PC-3 (cell line): ENCODE measurements at regions of chr1 and their contacts with region 1.

Region 1: GRCh38 chr1:87478231-87478630 is 149.6 kb downstream of the LMO4 start:
- DNase-seq: peak; percentile 28
- ATAC-seq: peak; percentile 65
- H3K4me3 ChIP-seq: no peak overlapping the region
- H3K27ac ChIP-seq: no peak overlapping the region
- H3K4me1 ChIP-seq: peaks cover 13% of the 10 kb centered on the region
- H3K27me3 ChIP-seq: no peaks in the 10 kb centered on the region
- CTCF ChIP-seq: peak; percentile 41; the same call in 1 of the 2 replicates

Region 2: GRCh38 chr1:87154384-87154783 is 323.8 kb before region 1 on chr1:
- CTCF ChIA-PET with region 1: no interaction called
- POLR2A ChIA-PET with region 1: no interaction called
- intact Hi-C with region 1: no loop called
- DNase-seq: no peak
- ATAC-seq: no peak
- H3K4me3 ChIP-seq: no peak overlapping the region
- H3K27ac ChIP-seq: no peak overlapping the region
- H3K4me1 ChIP-seq: peaks cover 5% of the 10 kb centered on the region; the same call in 1 of the 2 replicates
- H3K27me3 ChIP-seq: no peaks in the 10 kb centered on the region
- CTCF ChIP-seq: no peak

Region 3: GRCh38 chr1:87335175-87335884 is 142.9 kb before region 1 on chr1:
- CTCF ChIA-PET with region 1: no interaction called
- POLR2A ChIA-PET with region 1: no interaction called
- intact Hi-C with region 1: loop called (anchors 10 kb)
- DNase-seq: peak; percentile 59
- ATAC-seq: peak; percentile 41
- H3K4me3 ChIP-seq: peak overlapping the region; percentile 73
- H3K27ac ChIP-seq: peak overlapping the region; percentile 38
- H3K4me1 ChIP-seq: peaks cover 32% of the 10 kb centered on the region
- H3K27me3 ChIP-seq: no peaks in the 10 kb centered on the region
- CTCF ChIP-seq: 0 out of 2 replicates have a peak, but pooled peaks have one; percentile 20

Region 4: DNA sequence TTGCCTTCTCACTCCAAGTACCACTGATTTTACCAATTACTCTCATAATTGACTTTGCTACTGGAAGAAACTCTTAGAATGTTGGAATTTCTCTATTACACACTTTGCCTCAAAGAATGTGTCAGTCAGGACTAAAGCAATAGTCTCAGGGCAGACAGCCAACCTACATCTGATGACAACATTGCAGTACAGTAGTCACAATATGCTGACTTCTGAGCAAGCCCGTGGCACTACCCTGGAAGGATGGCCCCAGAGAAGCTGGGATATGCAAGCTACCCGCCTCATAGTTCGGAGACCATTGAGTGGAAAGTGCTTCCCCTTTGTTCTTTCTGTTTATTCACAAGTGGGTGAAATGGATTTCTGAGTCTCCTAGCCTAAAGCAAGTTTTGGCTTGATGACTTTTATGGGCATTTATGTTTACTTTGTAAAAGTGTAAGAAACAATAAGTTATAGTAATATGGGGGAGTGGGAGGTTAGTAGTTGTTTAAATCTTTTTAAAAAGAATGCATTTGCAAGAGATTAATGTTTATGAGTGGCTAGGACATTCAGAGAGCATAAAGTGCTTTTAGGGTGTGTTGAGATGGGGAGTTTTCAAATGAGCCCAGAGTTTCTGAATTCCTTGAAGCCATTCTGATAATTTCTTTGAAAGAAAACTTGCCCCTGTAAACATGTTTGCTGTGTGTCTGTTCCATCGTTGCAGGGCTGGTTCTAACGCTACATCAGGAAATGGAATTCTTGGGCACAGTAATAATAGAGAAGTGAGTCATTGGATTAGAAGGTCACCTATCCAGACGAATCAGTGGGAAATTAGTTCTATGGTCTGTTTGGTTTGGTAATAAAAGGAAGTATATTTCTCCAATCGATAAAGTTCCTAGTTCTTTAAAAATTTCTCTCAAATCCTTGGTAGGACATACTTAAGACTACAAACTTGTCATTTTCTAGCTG is 85.7 kb before region 1 on chr1:
- CTCF ChIA-PET with region 1: no interaction called
- POLR2A ChIA-PET with region 1: no interaction called
- intact Hi-C with region 1: loop called (anchors 5 kb)
- DNase-seq: peak; percentile 89
- ATAC-seq: peak; percentile 92
- H3K4me3 ChIP-seq: peak overlapping the region; percentile 42
- H3K27ac ChIP-seq: peak overlapping the region; percentile 82
- H3K4me1 ChIP-seq: peaks cover 21% of the 10 kb centered on the region
- H3K27me3 ChIP-seq: no peaks in the 10 kb centered on the region
- CTCF ChIP-seq: no peak; the same call in 1 of the 2 replicates

Region 5: GRCh38 chr1:87449348-87449963 is 28.8 kb before region 1 on chr1:
- CTCF ChIA-PET with region 1: no interaction called
- POLR2A ChIA-PET with region 1: no interaction called
- intact Hi-C with region 1: no loop called
- DNase-seq: peak; percentile 30
- ATAC-seq: no peak
- H3K4me3 ChIP-seq: no peak overlapping the region
- H3K27ac ChIP-seq: no peak overlapping the region
- H3K4me1 ChIP-seq: no peaks in the 10 kb centered on the region
- H3K27me3 ChIP-seq: no peaks in the 10 kb centered on the region
- CTCF ChIP-seq: no peak

Region 6: DNA sequence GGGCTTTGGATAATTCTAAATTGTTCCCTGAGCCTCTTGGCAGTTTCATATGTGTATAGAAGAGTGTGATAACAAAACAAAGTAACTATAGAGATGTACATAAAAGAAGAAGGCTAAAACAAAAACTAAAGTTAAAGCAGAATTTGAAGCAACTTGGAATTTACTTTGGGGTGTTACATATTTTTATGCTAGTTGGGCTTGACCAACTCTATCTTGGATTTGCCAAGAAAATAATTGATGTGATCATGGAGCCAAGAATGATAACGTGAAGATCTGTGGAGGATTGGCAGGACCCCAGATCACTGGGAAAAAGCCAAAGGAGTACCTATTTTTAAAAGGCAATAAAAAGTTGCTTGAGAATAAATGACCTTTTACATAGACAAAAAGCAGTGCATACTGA is 57.3 kb after region 1 on chr1:
- CTCF ChIA-PET with region 1: no interaction called
- POLR2A ChIA-PET with region 1: no interaction called
- intact Hi-C with region 1: no loop called
- DNase-seq: no peak
- ATAC-seq: no peak
- H3K4me3 ChIP-seq: no peak overlapping the region
- H3K27ac ChIP-seq: no peak overlapping the region
- H3K4me1 ChIP-seq: peaks cover 11% of the 10 kb centered on the region
- H3K27me3 ChIP-seq: no peaks in the 10 kb centered on the region
- CTCF ChIP-seq: no peak

Region 7: DNA sequence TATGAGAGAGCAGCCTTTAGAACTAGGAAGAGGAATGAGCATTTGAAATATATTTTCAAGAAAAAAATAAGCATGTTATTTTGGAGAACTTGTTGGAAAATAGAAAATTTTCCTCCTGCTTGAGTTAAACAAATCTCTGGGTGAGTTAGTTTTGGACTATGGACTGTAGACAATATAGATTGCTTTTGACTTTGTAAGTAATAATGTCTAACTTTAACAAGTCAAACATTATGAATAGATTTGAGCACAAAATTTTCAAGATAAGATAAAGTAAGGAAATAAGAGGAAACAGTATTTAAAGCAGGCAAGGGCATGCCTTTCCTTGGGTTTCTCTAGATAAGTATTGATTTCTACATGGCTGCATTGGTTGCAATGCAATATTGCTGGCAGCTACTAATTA is 211.3 kb after region 1 on chr1:
- CTCF ChIA-PET with region 1: no interaction called
- POLR2A ChIA-PET with region 1: no interaction called
- intact Hi-C with region 1: no loop called
- DNase-seq: no peak
- ATAC-seq: no peak
- H3K4me3 ChIP-seq: no peak overlapping the region
- H3K27ac ChIP-seq: no peak overlapping the region
- H3K4me1 ChIP-seq: peaks cover 8% of the 10 kb centered on the region; the same call in 1 of the 2 replicates
- H3K27me3 ChIP-seq: no peaks in the 10 kb centered on the region
- CTCF ChIP-seq: no peak